Activated B cell treated with CpG ODN at 0.5 μM for 24 hours (primary cell): ENCODE measurements at regions of chr10 and their contacts with region 1.

Region 1: DNA sequence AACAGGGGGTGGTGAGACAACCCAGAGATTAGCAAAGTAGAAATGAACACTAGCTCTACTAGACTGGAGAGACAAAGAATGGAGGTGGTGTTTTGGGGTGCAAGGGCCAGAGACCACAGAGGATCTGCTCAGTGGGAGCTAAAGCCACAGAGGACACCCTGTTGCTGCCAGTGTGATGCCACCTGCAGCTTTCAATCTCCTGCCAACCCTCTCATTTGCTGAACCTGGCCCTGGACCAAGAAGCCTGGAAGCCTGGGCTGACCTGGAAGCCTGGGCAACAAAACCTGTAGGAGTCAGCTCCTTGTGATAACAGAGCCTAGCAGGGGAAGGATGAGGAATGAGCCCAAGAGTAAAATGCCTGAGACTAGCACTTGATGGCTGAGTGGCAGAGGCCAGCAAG is 81.1 kb upstream of the ADO start:
- DNase-seq: no peak
- ATAC-seq: no peak
- H3K4me3 Mint-ChIP-seq: no peak overlapping the region
- H3K27ac Mint-ChIP-seq: no peak overlapping the region
- H3K4me1 Mint-ChIP-seq: no peaks in the 10 kb centered on the region
- H3K27me3 Mint-ChIP-seq: no peaks in the 10 kb centered on the region
- CTCF ChIP-seq: no peak

Region 2: DNA sequence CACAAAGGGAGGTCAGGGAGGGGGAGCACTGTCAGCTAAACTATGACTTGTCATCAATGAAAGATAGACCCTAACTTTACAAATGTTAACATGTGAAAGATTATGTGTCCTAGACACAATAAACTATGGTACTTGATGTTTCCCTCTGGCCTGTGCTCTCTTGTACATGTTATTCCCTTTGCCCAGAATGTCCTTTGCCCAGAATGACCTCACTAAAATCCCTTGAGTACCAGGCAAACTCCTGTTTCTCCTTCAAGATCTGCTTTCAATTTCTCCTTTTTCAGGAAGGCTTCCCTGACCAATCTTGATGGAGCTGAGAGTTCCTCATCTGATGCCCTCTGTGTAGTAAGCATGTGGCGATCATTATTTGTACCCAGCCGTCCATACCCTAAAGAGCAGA is 206.1 kb before region 1 on chr10:
- CTCF ChIA-PET with region 1: no interaction called
- POLR2A ChIA-PET with region 1: no interaction called
- intact Hi-C with region 1: no loop called
- DNase-seq: no peak
- ATAC-seq: no peak
- H3K4me3 Mint-ChIP-seq: no peak overlapping the region
- H3K27ac Mint-ChIP-seq: no peak overlapping the region
- H3K4me1 Mint-ChIP-seq: peaks cover 9% of the 10 kb centered on the region
- H3K27me3 Mint-ChIP-seq: peaks cover 2% of the 10 kb centered on the region
- CTCF ChIP-seq: no peak

Region 3: DNA sequence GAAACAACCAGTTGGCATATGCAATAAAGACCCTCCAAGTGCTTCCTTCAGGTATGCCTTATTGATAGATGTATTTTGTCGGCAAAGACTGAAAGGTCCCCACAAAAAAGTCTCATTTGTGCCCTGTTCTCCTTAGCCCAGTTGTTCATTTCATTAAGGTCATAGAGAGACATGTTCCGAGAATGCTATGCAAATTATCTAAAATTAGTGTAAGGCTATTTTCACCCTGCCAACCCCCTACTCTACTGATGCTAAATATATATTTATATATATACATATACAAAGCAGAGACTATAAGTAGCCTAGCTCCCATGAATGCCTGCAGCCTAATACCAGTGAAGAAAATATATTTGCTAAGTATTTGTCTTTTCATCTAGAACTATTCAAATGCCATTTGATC is 15.6 kb before region 1 on chr10:
- CTCF ChIA-PET with region 1: no interaction called
- POLR2A ChIA-PET with region 1: no interaction called
- intact Hi-C with region 1: loop called (anchors 2 kb)
- DNase-seq: no peak
- ATAC-seq: peak; percentile 42
- H3K4me3 Mint-ChIP-seq: no peak overlapping the region
- H3K27ac Mint-ChIP-seq: no peak overlapping the region
- H3K4me1 Mint-ChIP-seq: peaks cover 37% of the 10 kb centered on the region
- H3K27me3 Mint-ChIP-seq: no peaks in the 10 kb centered on the region
- CTCF ChIP-seq: no peak